ENCODE measurements at regions of chr10 and their contacts with region 1.

Region 1: GRCh38 chr10:101467286-101467770 is 113.4 kb downstream of the BTRC start:
- DNase-seq: peak; percentile 72

Region 2: DNA sequence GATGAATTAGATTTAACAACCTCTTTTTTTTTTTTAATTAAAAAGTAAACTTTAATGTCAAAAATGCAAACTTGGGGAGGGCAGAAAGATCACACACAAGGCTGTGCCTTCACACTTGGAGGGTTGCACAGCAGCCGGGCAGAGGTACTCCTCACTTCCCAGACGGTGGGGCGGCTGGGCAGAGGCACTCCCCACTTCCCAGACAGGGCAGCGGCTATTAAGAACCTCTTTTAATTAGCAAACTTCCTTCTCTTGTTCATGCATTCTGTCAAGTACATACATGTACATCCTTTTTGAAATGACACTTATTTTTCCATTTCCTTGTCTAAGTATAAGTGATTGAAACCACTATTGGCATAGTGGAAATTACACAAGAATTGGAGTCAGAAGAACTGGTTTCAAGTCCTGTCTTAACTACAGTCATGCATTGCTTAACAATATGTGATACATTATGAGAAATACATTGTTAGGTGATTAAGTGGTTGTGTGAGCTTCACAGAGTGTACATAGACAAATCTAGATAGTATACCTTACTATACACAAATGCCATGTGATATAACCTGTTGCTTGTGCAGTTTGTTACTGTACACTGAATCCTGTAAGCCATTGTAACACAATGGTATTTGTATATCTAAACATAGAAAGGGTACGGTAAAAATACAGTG is 86.8 kb before region 1 on chr10:
- CTCF ChIA-PET with region 1: no interaction called
- POLR2A ChIA-PET with region 1: no interaction called
- DNase-seq: no peak

Region 3: GRCh38 chr10:101453791-101454718 is 13.3 kb before region 1 on chr10:
- CTCF ChIA-PET with region 1: interaction called, 17 read pairs
- POLR2A ChIA-PET with region 1: no interaction called
- DNase-seq: no peak

Region 4: GRCh38 chr10:101676565-101676964 is 209.2 kb after region 1 on chr10:
- CTCF ChIA-PET with region 1: no interaction called
- POLR2A ChIA-PET with region 1: no interaction called
- DNase-seq: no peak

Measured in HEK293T (cell line).